GM10248 (cell line): ENCODE measurements at regions of chrX and their contacts with region 1.

Region 1: GRCh38 chrX:129772796-129773431 is 6.8 kb upstream of the SASH3 start:
- DNase-seq: peak; percentile 64
- CTCF ChIP-seq: no peak

Region 2: DNA sequence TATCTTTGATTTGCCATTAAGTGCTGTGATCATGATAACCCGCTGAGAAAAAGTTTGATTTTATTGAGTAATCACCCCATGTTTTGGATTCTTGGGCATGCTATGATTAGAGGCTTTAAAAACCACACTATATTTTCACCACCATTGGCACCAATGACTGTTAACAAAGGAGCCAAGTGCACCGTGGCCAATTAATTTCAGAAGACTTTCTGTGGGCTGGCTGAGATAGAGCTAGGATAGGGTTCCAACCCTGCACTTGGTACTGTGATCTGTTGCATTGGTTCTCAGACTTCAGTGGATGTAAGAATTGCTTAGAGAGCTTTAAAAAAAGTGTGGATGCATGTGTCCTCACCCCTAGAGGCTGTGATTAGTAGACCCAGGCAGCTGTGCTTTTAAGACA is 200.5 kb before region 1 on chrX:
- CTCF ChIA-PET with region 1: no interaction called
- POLR2A ChIA-PET with region 1: no interaction called
- DNase-seq: no peak
- CTCF ChIP-seq: no peak

Region 3: DNA sequence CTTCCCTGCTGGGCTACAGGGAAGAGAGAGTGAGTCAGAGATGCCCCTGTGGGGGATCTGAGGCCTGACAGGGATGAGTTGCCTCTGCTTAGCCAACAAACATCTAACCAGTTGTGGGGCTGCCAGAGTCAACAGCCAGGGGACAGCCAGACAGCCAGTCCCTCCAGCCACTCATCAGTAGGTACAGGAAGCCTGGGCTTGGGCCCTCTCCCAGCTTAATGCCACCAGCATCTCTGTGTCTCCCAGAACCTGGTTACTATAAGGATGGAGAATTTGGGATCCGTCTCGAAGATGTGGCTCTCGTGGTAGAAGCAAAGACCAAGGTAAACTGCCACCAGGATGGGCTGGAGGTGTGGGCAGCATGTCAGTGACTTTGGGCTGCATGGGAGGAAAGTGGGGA is 10.5 kb before region 1 on chrX:
- CTCF ChIA-PET with region 1: interaction called, 13 read pairs
- POLR2A ChIA-PET with region 1: interaction called, 4 read pairs
- DNase-seq: no peak
- CTCF ChIP-seq: no peak

Region 4: DNA sequence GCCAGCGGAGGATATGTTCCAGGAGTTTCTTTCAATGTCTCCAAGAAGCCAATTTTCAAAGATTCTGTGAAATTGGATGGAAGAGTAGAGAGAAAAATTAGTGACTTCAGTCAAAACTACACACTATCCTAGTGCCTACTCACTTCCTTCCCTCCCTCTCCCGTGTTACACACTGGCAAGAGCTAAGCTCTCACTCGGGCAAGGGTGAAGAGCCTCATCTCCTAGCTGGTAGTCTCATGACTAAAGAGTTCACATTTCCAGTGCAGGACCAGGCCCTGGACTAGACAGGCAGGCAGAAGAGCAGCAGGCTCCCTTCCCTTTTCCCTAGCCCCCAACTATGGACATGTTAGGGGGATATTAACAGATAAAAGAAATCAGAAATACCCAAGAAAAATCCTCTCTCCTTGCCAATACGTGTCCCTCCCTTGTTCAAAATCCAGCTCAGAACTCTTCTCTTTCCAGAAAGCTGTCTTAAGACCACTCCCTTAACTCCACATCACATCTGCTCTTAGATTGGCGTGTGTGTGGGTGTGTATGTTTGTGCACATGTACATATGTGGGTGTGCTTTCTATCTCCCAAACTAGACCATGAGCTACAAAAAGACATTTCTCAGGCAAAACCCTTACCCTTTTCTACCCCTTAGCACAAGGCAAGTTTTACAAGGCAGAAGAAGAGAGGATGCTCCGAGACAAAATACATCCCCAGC is 40.9 kb after region 1 on chrX:
- CTCF ChIA-PET with region 1: no interaction called
- POLR2A ChIA-PET with region 1: no interaction called
- DNase-seq: no peak
- CTCF ChIP-seq: no peak

Region 5: GRCh38 chrX:129945146-129945545 is 172.2 kb after region 1 on chrX:
- CTCF ChIA-PET with region 1: no interaction called
- POLR2A ChIA-PET with region 1: interaction called, 11 read pairs
- DNase-seq: no peak
- CTCF ChIP-seq: no peak

Region 6: GRCh38 chrX:130563476-130563875 is 790.6 kb after region 1 on chrX:
- CTCF ChIA-PET with region 1: no interaction called
- POLR2A ChIA-PET with region 1: no interaction called
- DNase-seq: no peak
- CTCF ChIP-seq: no peak